Heart left ventricle (tissue), 16 donors: ENCODE measurements at regions of chr11 and their contacts with region 1.

Region 1: GRCh38 chr11:128172046-128172878 is 415.1 kb downstream of the ETS1 start:
- DNase-seq: peak; percentile 74 to 83 (median 80)
- ATAC-seq: peak in 3 of 4 donors; percentile 77 to 85 (median 84)
- H3K4me3 ChIP-seq: no peak overlapping the region
- H3K27ac ChIP-seq: peak overlapping the region in 1 of 12 donors; percentile 19
- H3K4me1 ChIP-seq: peaks cover 0 to 8% (median 0%) of the 10 kb centered on the region in 12 donors
- H3K27me3 ChIP-seq: peaks cover 0 to 7% (median 0%) of the 10 kb centered on the region in 9 donors
- CTCF ChIP-seq: peak; percentile 50 to 91 (median 80)
- POLR2A ChIP-seq: no peak

Region 2: DNA sequence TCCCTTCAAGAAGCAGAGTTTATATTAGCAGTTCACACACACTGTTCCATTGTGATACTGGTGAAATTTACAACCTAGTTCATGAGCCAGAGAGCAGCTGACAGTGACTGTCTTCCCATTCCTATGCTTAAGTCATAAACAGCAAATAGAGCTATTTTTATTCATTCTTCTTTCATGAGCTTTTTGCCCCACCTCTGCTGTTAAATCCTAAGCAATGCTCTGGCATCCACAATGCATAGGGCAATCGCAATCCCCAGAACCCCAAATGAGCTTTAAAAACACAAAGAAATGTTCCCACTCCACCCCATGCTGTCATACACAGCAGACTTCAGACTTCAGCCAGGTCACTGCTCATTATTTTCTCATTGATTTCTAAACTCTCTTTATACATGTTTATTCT is 107.6 kb after region 1 on chr11:
- intact Hi-C with region 1: loop called in 5 of 10 experiments (anchors 5 to 10 kb)
- DNase-seq: no peak
- ATAC-seq: no peak
- H3K4me3 ChIP-seq: no peak overlapping the region
- H3K27ac ChIP-seq: no peak overlapping the region
- H3K4me1 ChIP-seq: no peaks in the 10 kb centered on the region
- H3K27me3 ChIP-seq: no peaks in the 10 kb centered on the region
- CTCF ChIP-seq: no peak
- POLR2A ChIP-seq: no peak